H1 (cell line): ENCODE measurements at regions of chr9 and their contacts with region 1.

Region 1: DNA sequence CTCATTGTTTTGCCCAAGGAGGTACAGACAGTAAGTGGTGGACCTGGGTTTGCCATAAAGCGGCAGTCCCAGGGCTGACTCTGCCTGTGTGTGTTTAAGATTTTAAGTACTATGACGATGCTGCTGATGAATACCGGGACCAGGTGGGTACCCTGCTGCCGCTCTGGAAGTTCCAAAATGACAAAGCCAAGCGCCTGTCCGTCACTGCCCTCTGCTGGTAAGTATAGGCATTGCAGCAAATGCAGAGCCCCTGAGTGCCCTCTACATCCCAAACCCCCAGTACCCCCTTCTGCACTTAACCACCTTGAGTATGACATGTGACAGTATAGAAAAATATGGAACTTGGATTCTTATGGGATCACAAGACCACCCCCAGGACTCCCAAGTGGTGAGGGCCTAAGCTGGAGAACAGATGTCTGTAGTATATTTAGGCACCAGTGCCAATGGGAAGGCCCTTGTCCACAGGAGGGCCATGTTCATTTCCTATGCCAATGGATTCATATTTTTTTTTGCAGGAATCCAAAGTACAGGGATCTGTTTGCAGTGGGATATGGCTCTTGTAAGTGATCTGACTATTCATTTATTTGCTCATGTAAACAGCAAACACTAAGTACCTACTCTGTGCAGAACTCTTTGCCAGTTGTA is 22.0 kb downstream of the ENHO start:
- DNase-seq: peak in 1 of 2 experiments; percentile 91
- H3K4me3 ChIP-seq: no peak overlapping the region
- H3K27ac ChIP-seq: no peak overlapping the region
- H3K4me1 ChIP-seq: 0 out of 7 replicates have a peak, but pooled peaks cover 0 to 3% (median 0%) of the 10 kb centered on the region in 4 experiments
- H3K27me3 ChIP-seq: no peaks in the 10 kb centered on the region; a peak in 1 of 7 replicates
- CTCF ChIP-seq: peak; percentile 90 to 97 (median 96)
- EP300 ChIP-seq: no peak
- POLR2A ChIP-seq: no peak
- RAD21 ChIP-seq: peak; percentile 92 to 93

Region 2: GRCh38 chr9:34291023-34291422 is 209.7 kb before region 1 on chr9:
- CTCF ChIA-PET with region 1: no interaction called
- POLR2A ChIA-PET with region 1: no interaction called
- DNase-seq: no peak
- H3K4me3 ChIP-seq: no peak overlapping the region
- H3K27ac ChIP-seq: no peak overlapping the region
- H3K4me1 ChIP-seq: no peaks in the 10 kb centered on the region
- H3K27me3 ChIP-seq: no peaks in the 10 kb centered on the region
- CTCF ChIP-seq: no peak
- EP300 ChIP-seq: no peak
- POLR2A ChIP-seq: no peak
- RAD21 ChIP-seq: no peak

Region 3: DNA sequence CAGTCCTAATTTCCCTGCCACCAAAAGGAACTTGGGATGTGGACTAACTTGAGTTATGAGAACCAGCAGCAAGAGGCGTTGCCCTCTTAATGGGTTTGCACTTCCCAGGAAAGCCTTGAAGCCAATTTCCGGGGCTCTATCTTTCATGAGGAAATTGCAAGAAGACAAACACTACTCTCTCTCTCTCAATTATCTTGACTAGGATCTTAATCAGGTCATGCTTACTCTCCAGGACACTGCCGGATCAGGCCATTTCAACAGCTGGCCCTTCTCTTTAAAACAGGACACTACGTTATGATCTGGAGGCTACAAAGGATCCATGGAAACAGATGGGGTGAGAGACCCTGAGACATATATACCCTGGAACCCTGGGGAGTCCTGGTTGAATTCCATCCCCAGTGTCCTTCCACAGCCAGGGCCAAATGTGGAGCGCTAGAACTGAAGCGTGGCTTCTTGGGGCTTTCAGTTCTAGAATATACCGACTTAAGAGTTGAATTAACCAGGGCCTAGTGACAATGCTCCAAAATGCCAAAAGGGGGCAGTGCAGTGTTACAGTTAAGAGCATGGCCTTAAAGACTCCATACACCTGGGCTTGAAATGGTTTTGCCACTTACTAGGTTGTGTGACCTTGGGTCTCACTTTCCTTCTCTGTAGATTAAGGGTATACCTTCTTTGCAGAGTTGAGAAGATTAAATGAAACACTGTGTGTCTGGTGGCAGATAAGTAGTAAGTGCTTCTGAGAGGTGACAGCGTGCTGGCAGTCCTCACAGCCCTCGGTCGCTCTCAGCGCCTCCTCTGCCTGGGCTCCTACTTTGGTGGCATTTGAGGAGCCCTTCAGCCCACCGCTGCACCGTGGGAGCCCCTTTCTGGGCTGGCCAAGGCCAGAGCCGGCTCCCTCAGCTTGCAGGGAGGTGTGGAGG is 63.5 kb before region 1 on chr9:
- CTCF ChIA-PET with region 1: interaction called, 106 read pairs
- POLR2A ChIA-PET with region 1: no interaction called
- DNase-seq: peak; percentile 47 to 73
- H3K4me3 ChIP-seq: no peak overlapping the region
- H3K27ac ChIP-seq: no peak overlapping the region
- H3K4me1 ChIP-seq: no peaks in the 10 kb centered on the region
- H3K27me3 ChIP-seq: no peaks in the 10 kb centered on the region
- CTCF ChIP-seq: peak in 2 of 3 experiments; percentile 91 to 94; a peak in 3 of 4 replicates
- EP300 ChIP-seq: no peak
- POLR2A ChIP-seq: no peak
- RAD21 ChIP-seq: peak; percentile 95 to 99

Region 4: GRCh38 chr9:34458013-34458958 is 42.5 kb before region 1 on chr9 and contains the starts of genes DNAI1 and FAM219A:
- CTCF ChIA-PET with region 1: interaction called, 73 read pairs
- POLR2A ChIA-PET with region 1: no interaction called
- DNase-seq: peak; percentile 95 to 99
- H3K4me3 ChIP-seq: peak within 1 kb of the TSS; percentile 64 to 87 (median 84)
- H3K27ac ChIP-seq: no peak within 1 kb of the TSS
- H3K4me1 ChIP-seq: peaks cover 0 to 12% (median 6%) of the 10 kb centered on the region in 4 experiments; a peak in 6 of 7 replicates
- H3K27me3 ChIP-seq: peaks cover 0 to 12% (median 7%) of the 10 kb centered on the region in 4 experiments; a peak in 4 of 7 replicates
- CTCF ChIP-seq: no peak
- EP300 ChIP-seq: no peak
- POLR2A ChIP-seq: peak in 1 of 2 experiments; percentile 67; a peak in 1 of 3 replicates
- RAD21 ChIP-seq: no peak
- total RNA-seq, gene DNAI1: 0.37 and 1.1 TPM in 2 replicates
- total RNA-seq, gene FAM219A: 10.4 and 10.6 TPM in 2 replicates

Region 5: GRCh38 chr9:34484682-34485081 is 16.1 kb before region 1 on chr9:
- CTCF ChIA-PET with region 1: interaction called, 72 read pairs
- POLR2A ChIA-PET with region 1: no interaction called
- DNase-seq: no peak
- H3K4me3 ChIP-seq: no peak overlapping the region
- H3K27ac ChIP-seq: no peak overlapping the region
- H3K4me1 ChIP-seq: no peaks in the 10 kb centered on the region
- H3K27me3 ChIP-seq: no peaks in the 10 kb centered on the region
- CTCF ChIP-seq: no peak
- EP300 ChIP-seq: no peak
- POLR2A ChIP-seq: no peak
- RAD21 ChIP-seq: no peak

Region 6: GRCh38 chr9:34522971-34523797 is 22.4 kb after region 1 on chr9 and contains the start of gene ENHO:
- CTCF ChIA-PET with region 1: interaction called, 53 read pairs
- POLR2A ChIA-PET with region 1: no interaction called
- DNase-seq: peak; percentile 82 to 99
- H3K4me3 ChIP-seq: peak within 1 kb of the TSS; percentile 56 to 78 (median 64)
- H3K27ac ChIP-seq: no peak within 1 kb of the TSS
- H3K4me1 ChIP-seq: peaks cover 0 to 17% (median 8%) of the 10 kb centered on the region in 4 experiments; a peak in 6 of 7 replicates
- H3K27me3 ChIP-seq: peaks cover 1 to 14% (median 11%) of the 10 kb centered on the region in 4 experiments; a peak in 6 of 7 replicates
- CTCF ChIP-seq: no peak
- EP300 ChIP-seq: no peak
- POLR2A ChIP-seq: 0 out of 3 replicates have a peak, but pooled peaks of 1 of the 2 experiments have one; percentile 38
- RAD21 ChIP-seq: no peak
- total RNA-seq, gene ENHO: 12.2 and 14.1 TPM in 2 replicates

Region 7: DNA sequence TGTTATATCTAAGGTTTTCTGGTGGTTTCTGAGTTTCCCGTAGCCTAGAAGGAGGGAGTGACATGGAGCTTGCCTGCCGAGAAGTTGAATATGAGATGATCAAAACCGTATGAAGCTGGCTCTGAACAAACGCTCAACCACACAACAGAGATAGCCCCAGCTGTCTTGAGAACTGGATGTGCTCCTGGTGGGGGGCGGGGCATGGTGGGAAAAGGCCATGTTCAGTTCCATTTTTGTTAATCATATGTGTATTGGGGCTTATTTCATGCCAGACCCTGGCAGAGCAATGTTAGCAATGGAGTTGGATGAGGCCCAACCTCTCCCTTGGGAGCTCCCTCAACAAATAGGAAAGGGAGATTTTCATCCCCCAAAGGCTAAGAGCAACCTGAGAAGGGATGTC is 185.5 kb after region 1 on chr9:
- CTCF ChIA-PET with region 1: no interaction called
- POLR2A ChIA-PET with region 1: no interaction called
- DNase-seq: no peak
- H3K4me3 ChIP-seq: no peak overlapping the region
- H3K27ac ChIP-seq: no peak overlapping the region
- H3K4me1 ChIP-seq: peaks cover 0 to 3% (median 1%) of the 10 kb centered on the region in 4 experiments; a peak in 2 of 7 replicates
- H3K27me3 ChIP-seq: no peaks in the 10 kb centered on the region
- CTCF ChIP-seq: no peak
- EP300 ChIP-seq: no peak
- POLR2A ChIP-seq: no peak
- RAD21 ChIP-seq: no peak